GM12878 (cell line): ENCODE measurements at regions of chr4 and their contacts with region 1.

Region 1: GRCh38 chr4:1289207-1290164 is at the start of gene MAEA:
- DNase-seq: peak; percentile 83
- ATAC-seq: peak; percentile 98
- H3K4me3 ChIP-seq: peak within 1 kb of the TSS; percentile 87
- H3K27ac ChIP-seq: peak within 1 kb of the TSS; percentile 78
- H3K4me1 ChIP-seq: peaks cover 19% of the 10 kb centered on the region
- H3K27me3 ChIP-seq: no peaks in the 10 kb centered on the region
- CTCF ChIP-seq: no peak
- EP300 ChIP-seq: no peak
- POLR2A ChIP-seq: peak; percentile 95
- RAD21 ChIP-seq: no peak
- polyA plus RNA-seq, gene MAEA: 3.6 to 7.5 TPM

Region 2: GRCh38 chr4:473570-474457 is 815.7 kb before region 1 on chr4:
- CTCF ChIA-PET with region 1: no interaction called
- POLR2A ChIA-PET with region 1: no interaction called
- RAD21 ChIA-PET with region 1: no interaction called
- SMC1A ChIA-PET with region 1: no interaction called
- in situ Hi-C with region 1: no loop called
- intact Hi-C with region 1: no loop called
- DNase-seq: peak; percentile 99
- ATAC-seq: peak; percentile 99
- H3K4me3 ChIP-seq: peak overlapping the region; percentile 92
- H3K27ac ChIP-seq: peak overlapping the region; percentile 95
- H3K4me1 ChIP-seq: no peaks in the 10 kb centered on the region
- H3K27me3 ChIP-seq: no peaks in the 10 kb centered on the region
- CTCF ChIP-seq: no peak
- EP300 ChIP-seq: no peak
- POLR2A ChIP-seq: peak; percentile 97
- RAD21 ChIP-seq: no peak

Region 3: GRCh38 chr4:1130316-1131186 is 158.9 kb before region 1 on chr4:
- CTCF ChIA-PET with region 1: interaction called, 31 read pairs
- POLR2A ChIA-PET with region 1: no interaction called
- RAD21 ChIA-PET with region 1: interaction called, 8 read pairs
- SMC1A ChIA-PET with region 1: interaction called, 12 read pairs
- in situ Hi-C with region 1: no loop called
- intact Hi-C with region 1: loop called (anchors 1 kb)
- DNase-seq: peak; percentile 57
- ATAC-seq: peak; percentile 100
- H3K4me3 ChIP-seq: no peak overlapping the region
- H3K27ac ChIP-seq: no peak overlapping the region
- H3K4me1 ChIP-seq: no peaks in the 10 kb centered on the region; the same call in 1 of the 2 replicates
- H3K27me3 ChIP-seq: no peaks in the 10 kb centered on the region
- CTCF ChIP-seq: peak; percentile 99 to 100 (median 99); a peak in 5 of 6 replicates
- EP300 ChIP-seq: no peak
- POLR2A ChIP-seq: no peak
- RAD21 ChIP-seq: peak; percentile 100